ENCODE measurements at regions of chr2 and their contacts with region 1.

Region 1: GRCh38 chr2:72573232-72573631 is 252.6 kb downstream of the EXOC6B start:
- DNase-seq: no peak
- ATAC-seq: no peak
- H3K4me3 ChIP-seq: no peak overlapping the region
- H3K27ac ChIP-seq: no peak overlapping the region
- H3K4me1 ChIP-seq: no peaks in the 10 kb centered on the region
- H3K27me3 ChIP-seq: no peaks in the 10 kb centered on the region
- CTCF ChIP-seq: no peak

Region 2: DNA sequence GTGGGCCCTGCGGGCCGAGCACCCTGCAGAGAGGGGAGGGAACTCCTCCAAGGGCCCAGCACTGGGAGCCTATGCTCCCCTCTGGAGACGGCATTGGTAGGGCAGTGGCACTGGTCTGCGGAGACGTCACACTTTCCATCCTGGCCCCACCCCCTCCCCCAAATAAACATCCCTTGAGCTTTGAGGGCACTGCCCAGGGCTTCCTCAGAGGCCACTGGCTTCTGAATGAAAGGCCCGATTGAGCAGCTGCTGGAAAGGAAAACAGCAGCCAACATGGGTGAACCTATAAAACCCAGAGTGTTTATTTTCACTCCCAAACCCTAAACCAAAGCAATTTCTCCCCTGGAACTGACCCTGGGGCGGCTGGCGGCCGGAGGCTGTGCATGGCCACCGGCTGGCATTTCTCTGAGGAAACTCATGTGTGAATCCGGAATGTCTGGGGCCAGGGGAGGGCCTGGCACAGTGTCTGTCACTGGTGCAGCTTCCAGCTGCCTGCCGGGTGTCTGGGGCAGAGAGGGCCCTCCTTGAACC is 981.0 kb before region 1 on chr2:
- CTCF ChIA-PET with region 1: interaction called, 13 read pairs
- POLR2A ChIA-PET with region 1: no interaction called
- in situ Hi-C with region 1: no loop called
- intact Hi-C with region 1: no loop called
- DNase-seq: no peak
- ATAC-seq: peak; percentile 46
- H3K4me3 ChIP-seq: no peak overlapping the region
- H3K27ac ChIP-seq: no peak overlapping the region
- H3K4me1 ChIP-seq: peaks cover 13% of the 10 kb centered on the region
- H3K27me3 ChIP-seq: no peaks in the 10 kb centered on the region
- CTCF ChIP-seq: no peak

Measured in Panc1 (cell line).